ENCODE measurements at regions of chr2 and their contacts with region 1.

Region 1: GRCh38 chr2:134118279-134119116 is 135.4 kb upstream of the MGAT5 start:
- DNase-seq: peak; percentile 69 to 90
- ATAC-seq: peak; percentile 41 to 76
- H3K4me3 ChIP-seq: no peak overlapping the region
- H3K27ac ChIP-seq: peak overlapping the region; percentile 2 to 19; a peak in 1 of 6 replicates
- H3K4me1 ChIP-seq: peaks cover 19% of the 10 kb centered on the region
- CTCF ChIP-seq: peak; percentile 87
- EP300 ChIP-seq: no peak
- POLR2A ChIP-seq: no peak
- RAD21 ChIP-seq: peak; percentile 91 to 92

Region 2: DNA sequence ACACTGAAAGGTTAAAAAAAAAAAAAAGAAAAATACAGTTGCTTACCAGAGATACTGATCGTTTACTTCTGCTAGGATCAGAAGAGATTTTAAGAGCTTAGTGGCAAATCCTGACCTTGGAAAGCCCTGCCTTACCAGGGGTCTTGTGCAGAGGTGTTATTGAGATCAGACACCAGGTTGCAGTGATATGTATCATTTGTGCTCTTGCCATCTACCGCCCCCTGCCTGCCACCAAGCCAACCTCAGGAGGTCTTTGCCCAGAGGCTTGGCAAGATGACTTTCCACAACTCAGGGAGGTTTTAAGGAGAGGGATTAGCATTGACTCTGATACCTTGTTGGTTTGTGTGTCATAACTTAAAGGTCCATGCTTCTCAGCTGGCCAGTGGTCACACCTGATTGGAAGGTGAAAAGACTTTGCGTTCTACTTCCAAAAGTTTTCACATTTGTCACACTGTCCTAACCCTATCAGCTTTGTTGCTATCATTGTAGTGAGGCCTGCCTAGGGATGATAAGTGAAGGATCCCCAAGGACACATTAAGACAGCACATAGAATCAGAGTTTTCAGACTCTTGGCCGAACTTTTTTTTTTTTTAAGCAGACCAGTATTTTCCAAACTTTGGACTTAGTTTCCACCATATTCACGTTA is 89.2 kb after region 1 on chr2:
- CTCF ChIA-PET with region 1: interaction called, 70 read pairs
- POLR2A ChIA-PET with region 1: interaction called, 3 read pairs
- DNase-seq: peak; percentile 51 to 69
- ATAC-seq: peak; percentile 99 to 100
- H3K4me3 ChIP-seq: no peak overlapping the region
- H3K27ac ChIP-seq: no peak overlapping the region
- H3K4me1 ChIP-seq: no peaks in the 10 kb centered on the region
- CTCF ChIP-seq: peak; percentile 66
- EP300 ChIP-seq: no peak
- POLR2A ChIP-seq: no peak
- RAD21 ChIP-seq: peak; percentile 75 to 80

Region 3: GRCh38 chr2:134238371-134238770 is 119.9 kb after region 1 on chr2:
- CTCF ChIA-PET with region 1: interaction called, 76 read pairs
- POLR2A ChIA-PET with region 1: no interaction called
- DNase-seq: no peak
- ATAC-seq: no peak
- H3K4me3 ChIP-seq: no peak overlapping the region
- H3K27ac ChIP-seq: no peak overlapping the region
- H3K4me1 ChIP-seq: no peaks in the 10 kb centered on the region
- CTCF ChIP-seq: no peak
- EP300 ChIP-seq: no peak
- POLR2A ChIP-seq: no peak
- RAD21 ChIP-seq: no peak

Region 4: GRCh38 chr2:134411828-134412638 is 293.5 kb after region 1 on chr2:
- CTCF ChIA-PET with region 1: interaction called, 59 read pairs
- POLR2A ChIA-PET with region 1: no interaction called
- DNase-seq: peak; percentile 18 to 67
- ATAC-seq: peak; percentile 96 to 98
- H3K4me3 ChIP-seq: no peak overlapping the region
- H3K27ac ChIP-seq: no peak overlapping the region
- H3K4me1 ChIP-seq: 0 out of 3 replicates have a peak, but pooled peaks cover 4% of the 10 kb centered on the region
- CTCF ChIP-seq: peak; percentile 59
- EP300 ChIP-seq: no peak
- POLR2A ChIP-seq: no peak
- RAD21 ChIP-seq: peak; percentile 74 to 77